HCT116 (cell line): ENCODE measurements at regions of chr7 and their contacts with region 1.

Region 1: GRCh38 chr7:92833024-92833765 is 3.2 kb downstream of the CDK6 start:
- DNase-seq: peak; percentile 70
- ATAC-seq: peak; percentile 67
- H3K4me3 ChIP-seq: peak overlapping the region; percentile 65 to 77
- H3K27ac ChIP-seq: peak overlapping the region; percentile 87
- H3K4me1 ChIP-seq: peaks cover 12 to 43% of the 10 kb centered on the region in 2 experiments
- H3K27me3 ChIP-seq: no peaks in the 10 kb centered on the region
- CTCF ChIP-seq: peak; percentile 74 to 87 (median 81)
- POLR2A ChIP-seq: no peak
- RAD21 ChIP-seq: peak; percentile 91

Region 2: DNA sequence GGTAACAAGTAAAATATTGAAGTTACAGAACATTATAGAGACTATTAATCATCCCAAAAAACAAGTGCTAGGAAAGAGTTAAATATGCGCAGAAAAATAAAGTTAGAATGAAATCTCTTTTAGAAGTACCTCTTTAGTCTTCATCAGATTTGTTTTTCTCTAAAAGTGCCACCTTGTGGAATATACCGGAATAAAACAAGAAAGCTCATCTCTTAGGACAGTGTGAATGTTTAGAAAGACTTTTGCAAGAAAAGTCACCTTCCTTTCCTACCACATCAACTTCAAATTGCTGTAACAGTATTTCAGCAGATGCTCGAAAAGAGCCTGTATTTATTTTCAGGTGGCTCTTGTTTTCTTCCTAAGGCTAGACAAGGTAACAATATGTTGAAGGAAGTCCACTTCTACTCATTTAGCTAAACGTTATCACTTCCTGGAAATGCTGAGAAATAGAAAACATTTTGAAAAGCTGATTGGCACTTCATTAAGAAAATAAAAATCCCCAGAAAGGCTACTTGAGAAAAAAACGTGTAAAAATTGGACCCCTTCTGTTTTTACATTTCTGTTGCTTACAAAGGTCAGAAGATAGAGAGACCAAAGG is 223.2 kb before region 1 on chr7:
- CTCF ChIA-PET with region 1: interaction called, 11 read pairs
- POLR2A ChIA-PET with region 1: no interaction called
- RAD21 ChIA-PET with region 1: no interaction called
- intact Hi-C with region 1: no loop called
- DNase-seq: no peak
- ATAC-seq: peak; percentile 67
- H3K4me3 ChIP-seq: no peak overlapping the region
- H3K27ac ChIP-seq: no peak overlapping the region
- H3K4me1 ChIP-seq: peaks cover 0 to 8% of the 10 kb centered on the region in 2 experiments; a peak in 2 of 4 replicates
- H3K27me3 ChIP-seq: no peaks in the 10 kb centered on the region
- CTCF ChIP-seq: peak; percentile 34 to 48 (median 38); a peak in 5 of 6 replicates
- POLR2A ChIP-seq: no peak
- RAD21 ChIP-seq: peak; percentile 35

Region 3: DNA sequence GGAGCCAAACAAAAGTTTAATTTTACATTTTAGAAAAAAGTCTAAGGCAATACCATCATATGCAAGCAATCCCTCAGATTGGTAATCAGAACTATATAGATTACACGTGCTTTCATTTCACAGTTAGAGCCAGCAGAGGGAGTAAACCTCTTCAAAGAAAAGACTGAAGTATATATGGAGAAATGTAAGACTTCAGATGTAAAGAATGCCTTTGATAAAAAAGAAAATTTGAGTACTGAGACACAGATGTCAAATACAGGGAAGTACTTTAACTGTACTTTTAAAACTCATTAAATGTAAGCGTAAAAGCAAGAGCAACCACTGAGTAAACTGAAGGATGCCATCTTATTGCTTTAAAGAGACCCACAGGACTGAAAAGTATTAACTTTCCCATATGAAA is 141.6 kb before region 1 on chr7:
- CTCF ChIA-PET with region 1: interaction called, 7 read pairs
- POLR2A ChIA-PET with region 1: no interaction called
- RAD21 ChIA-PET with region 1: interaction called in 1 of 2 experiments, 6 read pairs
- intact Hi-C with region 1: loop called (anchors 1 kb)
- DNase-seq: peak; percentile 52
- ATAC-seq: peak; percentile 39; the same call in 1 of the 2 replicates
- H3K4me3 ChIP-seq: no peak overlapping the region
- H3K27ac ChIP-seq: no peak overlapping the region
- H3K4me1 ChIP-seq: peaks cover 25 to 48% of the 10 kb centered on the region in 2 experiments
- H3K27me3 ChIP-seq: no peaks in the 10 kb centered on the region
- CTCF ChIP-seq: peak; percentile 58 to 76 (median 75)
- POLR2A ChIP-seq: no peak
- RAD21 ChIP-seq: peak; percentile 80

Region 4: DNA sequence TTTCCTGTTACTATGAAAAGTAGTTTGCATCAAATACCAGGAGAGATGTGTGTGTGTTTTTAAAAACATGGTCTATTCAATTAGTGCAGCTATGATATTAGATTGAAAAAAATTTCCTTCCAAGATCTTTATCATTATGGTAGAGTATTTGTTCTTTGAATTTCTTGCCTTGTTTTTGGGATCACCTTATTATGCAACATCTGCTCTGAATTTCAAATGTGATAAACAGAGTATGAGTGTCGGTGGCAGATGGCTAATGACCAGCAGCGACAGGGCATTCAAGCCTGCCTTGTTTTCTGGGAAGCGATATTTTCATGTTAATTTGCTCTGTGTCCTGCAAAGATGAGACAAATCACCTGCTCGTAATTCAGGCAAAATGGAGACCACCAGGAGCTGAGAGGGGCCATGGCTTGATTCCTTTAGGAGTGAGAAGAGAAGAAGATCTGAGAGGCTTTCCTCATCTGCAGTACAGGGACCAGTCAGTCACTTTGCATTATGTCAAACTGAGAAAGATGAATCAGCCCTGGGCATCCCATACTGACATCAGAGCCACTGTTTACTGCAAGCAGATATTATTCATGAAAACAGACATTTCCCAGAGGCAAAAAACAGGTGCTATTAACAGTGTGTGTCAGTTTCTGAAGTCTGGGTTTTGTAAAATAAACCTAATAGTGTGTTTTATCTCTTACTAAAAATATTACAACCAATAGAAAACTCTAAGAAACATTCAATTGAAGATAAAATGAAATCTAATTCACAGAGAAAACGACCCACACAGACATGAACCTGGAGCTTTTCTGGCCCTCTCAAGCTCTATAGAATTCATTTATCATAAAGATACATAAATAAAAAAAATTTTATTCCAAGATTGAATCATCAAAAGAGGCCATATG is 64.4 kb before region 1 on chr7:
- CTCF ChIA-PET with region 1: interaction called, 7 read pairs
- POLR2A ChIA-PET with region 1: no interaction called
- RAD21 ChIA-PET with region 1: no interaction called
- intact Hi-C with region 1: loop called (anchors 5 kb)
- DNase-seq: no peak
- ATAC-seq: no peak
- H3K4me3 ChIP-seq: no peak overlapping the region
- H3K27ac ChIP-seq: no peak overlapping the region
- H3K4me1 ChIP-seq: peaks cover 36 to 57% of the 10 kb centered on the region in 2 experiments
- H3K27me3 ChIP-seq: no peaks in the 10 kb centered on the region
- CTCF ChIP-seq: no peak
- POLR2A ChIP-seq: no peak
- RAD21 ChIP-seq: no peak

Region 5: DNA sequence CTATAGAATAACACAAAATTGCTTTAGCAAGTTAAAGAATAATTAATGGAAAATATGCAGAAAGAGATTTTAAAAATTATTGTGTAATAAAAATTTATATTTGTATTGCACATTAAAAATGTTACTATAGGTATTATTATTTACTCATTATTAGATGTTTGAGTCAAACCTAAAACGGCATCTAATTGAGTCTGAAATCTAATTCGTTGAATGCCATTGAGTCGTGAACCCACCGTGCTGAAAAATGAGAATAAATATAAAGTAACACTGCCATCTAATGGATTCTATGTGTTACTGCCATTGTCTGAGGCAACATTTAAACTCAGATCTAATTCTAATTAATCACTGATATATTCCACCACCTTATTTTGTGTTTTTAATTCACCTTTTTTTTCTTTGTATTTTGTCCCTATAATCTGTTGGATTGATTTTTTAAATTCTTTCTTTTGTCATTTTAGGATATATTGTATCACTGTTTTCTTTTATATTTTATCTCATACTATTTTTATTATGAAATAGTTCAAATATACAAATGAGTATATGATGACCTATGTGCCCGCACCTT is 222.4 kb after region 1 on chr7:
- CTCF ChIA-PET with region 1: no interaction called
- POLR2A ChIA-PET with region 1: no interaction called
- RAD21 ChIA-PET with region 1: interaction called in 1 of 2 experiments, 3 read pairs
- intact Hi-C with region 1: loop called (anchors 2 kb)
- DNase-seq: no peak
- ATAC-seq: peak; percentile 77
- H3K4me3 ChIP-seq: no peak overlapping the region
- H3K27ac ChIP-seq: no peak overlapping the region
- H3K4me1 ChIP-seq: no peaks in the 10 kb centered on the region
- H3K27me3 ChIP-seq: no peaks in the 10 kb centered on the region
- CTCF ChIP-seq: peak; percentile 51 to 71 (median 66)
- POLR2A ChIP-seq: no peak
- RAD21 ChIP-seq: peak; percentile 88